ENCODE measurements at regions of chr2 and their contacts with region 1.

Region 1: GRCh38 chr2:178891265-178891958 is 84.2 kb upstream of the TTN start:
- DNase-seq: peak; percentile 33
- ATAC-seq: peak; percentile 94
- H3K4me3 ChIP-seq: no peak overlapping the region
- H3K27ac ChIP-seq: no peak overlapping the region
- H3K4me1 ChIP-seq: no peaks in the 10 kb centered on the region
- H3K27me3 ChIP-seq: no peaks in the 10 kb centered on the region
- CTCF ChIP-seq: peak; percentile 87 to 91 (median 90)
- EP300 ChIP-seq: no peak
- POLR2A ChIP-seq: no peak
- RAD21 ChIP-seq: peak; percentile 89

Region 2: GRCh38 chr2:178834086-178834485 is 57.3 kb before region 1 on chr2:
- CTCF ChIA-PET with region 1: no interaction called
- POLR2A ChIA-PET with region 1: no interaction called
- RAD21 ChIA-PET with region 1: no interaction called
- SMC1A ChIA-PET with region 1: no interaction called
- in situ Hi-C with region 1: no loop called
- intact Hi-C with region 1: no loop called
- DNase-seq: no peak
- ATAC-seq: no peak
- H3K4me3 ChIP-seq: no peak overlapping the region
- H3K27ac ChIP-seq: no peak overlapping the region
- H3K4me1 ChIP-seq: no peaks in the 10 kb centered on the region
- H3K27me3 ChIP-seq: no peaks in the 10 kb centered on the region
- CTCF ChIP-seq: no peak
- EP300 ChIP-seq: no peak
- POLR2A ChIP-seq: no peak
- RAD21 ChIP-seq: no peak

Region 3: GRCh38 chr2:178905261-178905660 is 13.8 kb after region 1 on chr2:
- CTCF ChIA-PET with region 1: interaction called, 19 read pairs
- POLR2A ChIA-PET with region 1: interaction called, 3 read pairs
- RAD21 ChIA-PET with region 1: interaction called, 7 read pairs
- SMC1A ChIA-PET with region 1: interaction called, 14 read pairs
- in situ Hi-C with region 1: no loop called
- intact Hi-C with region 1: no loop called
- DNase-seq: no peak
- ATAC-seq: no peak
- H3K4me3 ChIP-seq: no peak overlapping the region
- H3K27ac ChIP-seq: no peak overlapping the region
- H3K4me1 ChIP-seq: no peaks in the 10 kb centered on the region
- H3K27me3 ChIP-seq: no peaks in the 10 kb centered on the region
- CTCF ChIP-seq: no peak
- EP300 ChIP-seq: no peak
- POLR2A ChIP-seq: no peak
- RAD21 ChIP-seq: no peak

Measured in GM12878 (cell line).